Left ventricle myocardium superior (tissue), 1 donor: ENCODE measurements at regions of chr2 and their contacts with region 1.

Region 1: GRCh38 chr2:38728694-38729093 is 22.5 kb downstream of the SRSF7 start:
- DNase-seq: no peak
- ATAC-seq: no peak

Region 2: DNA sequence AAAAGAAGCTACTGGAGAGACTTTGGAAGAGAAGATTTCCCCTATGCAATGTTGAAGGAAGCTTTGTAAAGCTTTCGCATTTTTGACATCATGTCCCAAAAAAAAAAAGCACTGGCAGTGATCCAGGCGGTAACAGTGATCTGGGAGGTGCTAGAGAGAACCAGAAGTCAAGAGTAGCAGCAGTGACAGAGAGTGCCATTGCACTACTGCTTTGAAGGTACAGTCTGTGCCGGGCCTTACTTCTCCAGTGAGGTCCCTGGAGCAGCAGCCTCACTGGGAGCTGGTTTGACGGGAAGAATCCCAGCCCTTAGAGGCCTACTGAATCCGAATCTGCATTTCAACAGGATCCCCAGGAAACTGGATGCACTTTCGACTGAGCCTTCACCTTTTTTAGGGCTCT is 300.8 kb before region 1 on chr2:
- intact Hi-C with region 1: no loop called
- DNase-seq: no peak
- ATAC-seq: peak; percentile 34

Region 3: DNA sequence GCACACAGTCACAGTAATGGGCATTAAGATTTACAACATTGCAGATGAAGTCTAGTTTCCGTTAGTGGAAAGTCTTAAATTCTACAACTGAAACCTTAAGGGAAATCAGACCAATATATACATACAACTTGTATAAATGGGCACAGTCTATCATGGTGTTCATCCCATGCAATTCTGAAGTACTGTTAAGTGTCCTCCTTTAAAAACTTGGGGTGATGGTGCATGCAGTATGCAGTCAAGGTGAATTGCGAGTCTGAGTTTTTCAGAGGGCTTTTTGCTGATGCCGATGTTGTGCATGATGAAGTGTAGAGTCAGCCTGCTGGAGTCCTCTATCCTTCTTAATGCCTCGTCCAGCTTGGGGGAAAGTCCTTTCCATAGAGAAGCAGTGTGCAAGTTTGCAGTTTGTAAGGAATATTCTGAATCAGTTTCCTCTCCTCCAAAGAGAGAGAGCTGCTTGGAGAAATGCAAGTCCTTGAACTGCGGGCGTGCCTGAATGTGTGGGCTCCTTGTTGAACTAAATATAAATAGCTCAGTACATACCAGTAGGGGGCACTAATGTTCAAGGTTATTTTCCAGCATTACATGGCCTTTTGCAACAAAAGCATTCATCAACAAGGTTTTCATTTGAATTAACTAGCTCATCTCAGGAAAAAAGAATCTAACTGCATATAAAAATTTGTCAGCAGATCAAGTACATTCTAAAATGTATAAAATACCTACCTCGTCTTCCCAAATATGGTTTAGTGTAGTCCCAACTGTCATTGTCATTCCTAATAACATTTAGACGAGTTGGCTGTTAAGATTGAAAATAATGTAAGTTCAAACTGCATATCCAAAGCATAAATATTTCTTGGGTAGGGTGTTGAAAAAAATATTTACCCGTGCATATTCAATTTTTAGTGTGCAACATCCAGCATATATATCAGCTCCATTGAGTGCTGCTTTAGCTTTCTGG is 147.2 kb before region 1 on chr2:
- intact Hi-C with region 1: loop called (anchors 5 kb)
- DNase-seq: peak; percentile 39
- ATAC-seq: peak; percentile 82